Breast epithelium (tissue), 4 donors: ENCODE measurements at regions of chr11 and their contacts with region 1.

Region 1: DNA sequence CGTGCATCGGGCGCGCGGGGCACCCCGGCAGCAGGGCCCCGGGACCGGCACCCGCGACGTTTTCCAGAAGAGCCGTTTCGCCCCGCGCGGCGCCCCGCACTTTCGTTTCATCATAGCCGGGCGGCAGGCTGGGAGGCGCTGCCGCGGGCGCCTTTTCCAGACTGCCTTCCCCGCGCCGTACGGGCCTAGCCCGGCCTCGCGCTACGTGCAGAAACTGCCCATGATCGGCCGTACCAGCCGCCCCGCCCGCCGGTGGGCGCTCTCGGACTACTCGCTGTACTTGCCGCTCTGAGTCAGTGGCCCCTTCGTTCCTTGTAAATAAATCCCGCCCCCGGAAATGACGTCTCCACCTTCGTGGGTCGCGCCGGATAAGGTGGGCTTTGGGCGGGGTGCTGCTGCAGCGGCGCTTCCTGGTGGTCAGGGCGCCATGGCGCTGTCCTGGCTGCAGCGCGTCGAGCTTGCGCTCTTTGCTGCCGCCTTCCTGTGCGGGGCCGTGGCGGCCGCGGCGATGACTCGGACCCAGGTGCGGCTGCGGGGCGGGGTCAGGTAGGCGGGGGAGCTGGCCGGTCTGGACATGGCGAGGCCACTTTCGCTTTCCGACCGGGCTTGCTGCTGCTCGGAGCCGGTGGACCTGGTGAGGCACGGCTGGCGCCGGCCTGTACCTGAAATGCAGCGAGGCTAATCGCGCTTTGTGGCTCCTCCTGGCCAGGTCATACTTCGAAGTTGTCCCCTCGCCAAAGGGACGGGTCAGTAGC is at the start of gene TMEM179B:
- DNase-seq: peak; percentile 98
- H3K4me3 ChIP-seq: peak within 1 kb of the TSS; percentile 97 to 100 (median 99)
- H3K27ac ChIP-seq: peak within 1 kb of the TSS; percentile 94 to 96
- H3K4me1 ChIP-seq: peaks cover 6 to 7% of the 10 kb centered on the region in 2 donors
- H3K27me3 ChIP-seq: no peaks in the 10 kb centered on the region
- CTCF ChIP-seq: peak in 1 of 3 donors; percentile 58
- POLR2A ChIP-seq: peak; percentile 96
- total RNA-seq, gene TMEM179B: 61.4 to 66.9 (median 64.9) TPM

Region 2: DNA sequence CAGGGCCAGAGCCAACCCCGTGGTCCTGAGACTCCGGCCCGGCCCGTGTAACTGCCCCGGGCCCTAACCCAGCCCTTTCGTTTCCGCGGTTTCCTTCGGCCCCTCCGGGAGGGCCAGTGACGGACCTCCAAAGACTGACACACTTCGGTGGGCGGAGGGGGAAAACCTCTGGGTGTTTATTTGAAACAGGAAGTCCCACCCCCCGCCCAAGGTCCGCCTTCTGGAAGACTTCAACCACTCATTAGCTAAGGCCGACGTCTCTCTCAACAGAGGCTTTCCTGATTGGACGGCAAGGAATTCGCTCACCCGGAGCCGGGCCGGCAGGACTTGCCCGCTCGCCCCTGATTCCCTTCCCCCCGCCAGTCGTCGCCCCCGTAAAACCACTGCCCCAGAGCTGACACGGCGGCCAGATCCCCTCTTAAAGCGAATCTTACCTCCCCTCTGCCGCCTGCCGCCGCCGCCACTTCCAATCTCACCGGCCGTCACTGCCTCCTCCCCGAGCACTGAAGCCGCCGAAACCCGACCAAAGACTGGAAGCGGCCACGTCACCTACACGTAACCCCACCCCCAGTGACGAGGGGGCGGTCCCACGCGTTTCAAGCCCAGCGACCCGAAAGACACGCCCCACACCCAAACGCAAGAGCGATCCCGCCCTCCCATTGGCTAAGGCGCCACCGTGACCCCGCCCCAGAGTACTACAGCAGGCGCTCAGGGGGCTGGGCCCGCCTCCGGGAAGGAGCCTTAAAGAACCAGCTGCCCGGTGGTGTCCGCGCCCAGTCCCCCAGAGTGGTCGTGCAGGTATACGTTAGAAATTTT is 44.5 kb after region 1 on chr11 and contains the start of gene STX5:
- intact Hi-C with region 1: loop called (anchors 10 kb)
- DNase-seq: peak; percentile 100
- H3K4me3 ChIP-seq: peak within 1 kb of the TSS; percentile 74 to 92 (median 88)
- H3K27ac ChIP-seq: peak within 1 kb of the TSS; percentile 98
- H3K4me1 ChIP-seq: peaks cover 4 to 6% of the 10 kb centered on the region in 2 donors
- H3K27me3 ChIP-seq: no peaks in the 10 kb centered on the region
- CTCF ChIP-seq: no peak
- POLR2A ChIP-seq: peak; percentile 92
- total RNA-seq, gene STX5: 30.8 to 42.3 (median 34.2) TPM

Region 3: DNA sequence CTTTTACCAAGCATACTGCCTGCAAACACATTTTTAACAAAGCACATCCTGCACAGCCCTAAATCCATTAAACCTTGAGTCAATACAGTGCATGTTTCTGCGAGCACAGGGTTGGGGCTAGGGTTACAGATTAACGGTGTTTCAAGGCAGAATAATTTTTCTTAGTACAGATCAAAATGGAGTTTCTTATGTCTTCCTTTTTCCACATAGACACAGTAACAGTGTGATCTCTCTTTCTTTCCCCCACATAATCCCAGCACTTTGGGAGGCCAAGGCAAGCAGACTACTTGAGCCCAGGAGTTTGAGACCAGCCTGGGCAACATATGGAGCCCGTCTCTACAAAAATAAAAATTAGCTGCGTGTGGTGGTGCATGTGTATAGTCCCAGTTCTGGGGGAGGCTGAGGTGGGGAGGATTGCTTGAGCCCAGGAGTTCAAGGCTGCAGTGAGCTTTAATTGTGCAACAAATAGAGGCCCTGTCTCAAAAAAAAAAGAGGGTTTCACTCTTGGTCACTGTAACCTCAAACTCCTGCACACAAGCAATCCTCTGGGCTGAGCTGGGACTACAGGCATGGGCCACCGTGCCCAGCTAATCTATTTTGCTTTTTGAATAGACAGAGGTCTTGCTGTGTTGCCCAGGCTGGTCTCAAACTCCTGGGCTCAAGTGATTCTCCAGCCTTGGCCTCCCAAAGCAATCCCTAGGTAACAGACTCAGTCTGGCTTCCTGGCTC is 73.8 kb after region 1 on chr11:
- intact Hi-C with region 1: loop called (anchors 10 kb)
- DNase-seq: no peak
- H3K4me3 ChIP-seq: no peak overlapping the region
- H3K27ac ChIP-seq: no peak overlapping the region
- H3K4me1 ChIP-seq: no peaks in the 10 kb centered on the region
- H3K27me3 ChIP-seq: no peaks in the 10 kb centered on the region
- CTCF ChIP-seq: no peak
- POLR2A ChIP-seq: no peak

Region 4: DNA sequence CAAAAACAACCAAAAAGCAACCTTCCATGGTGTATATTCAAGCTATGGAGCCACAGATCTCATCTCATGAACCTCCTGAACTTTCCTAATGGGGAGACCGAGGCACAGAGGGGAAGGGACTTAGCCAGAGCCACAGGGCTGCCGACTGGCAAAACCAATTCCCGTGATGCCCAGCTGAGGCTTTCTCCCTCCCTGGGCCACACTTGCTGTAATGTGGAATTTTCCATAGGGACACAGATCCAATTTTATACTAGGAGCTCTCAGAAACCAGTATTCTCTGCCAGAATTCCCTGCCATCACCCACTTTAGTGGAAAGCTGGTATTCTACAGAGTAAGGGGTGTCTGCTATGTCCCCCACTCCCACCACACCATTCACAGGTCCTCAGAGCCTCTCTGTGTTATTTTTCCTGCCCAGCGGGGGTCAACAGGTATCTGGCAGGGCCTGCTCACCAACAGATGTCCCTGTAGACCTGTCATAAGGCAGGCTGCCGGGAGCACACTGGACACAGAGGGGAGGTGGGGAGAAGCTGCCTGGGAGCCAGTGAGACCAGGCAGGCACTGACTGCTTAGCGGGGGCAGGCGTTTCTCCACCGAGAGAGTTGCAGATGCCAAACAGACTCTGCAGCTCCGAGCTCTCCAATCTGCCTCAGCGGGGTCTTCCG is 1597.9 kb after region 1 on chr11:
- intact Hi-C with region 1: loop called (anchors 5 kb)
- DNase-seq: no peak
- H3K4me3 ChIP-seq: peak overlapping the region in 1 of 3 donors; percentile 25
- H3K27ac ChIP-seq: peak overlapping the region in 1 of 2 donors; percentile 69
- H3K4me1 ChIP-seq: no peaks in the 10 kb centered on the region
- H3K27me3 ChIP-seq: peaks cover 0 to 3% of the 10 kb centered on the region in 2 donors
- CTCF ChIP-seq: no peak
- POLR2A ChIP-seq: no peak